ENCODE measurements at regions of chr2 and their contacts with region 1.

Region 1: GRCh38 chr2:158024288-158024898 is 77.3 kb upstream of the UPP2 start:
- DNase-seq: peak; percentile 58
- H3K4me3 Mint-ChIP-seq: no peak overlapping the region
- H3K27ac Mint-ChIP-seq: no peak overlapping the region
- H3K4me1 Mint-ChIP-seq: peaks cover 5% of the 10 kb centered on the region
- H3K27me3 Mint-ChIP-seq: peaks cover 3% of the 10 kb centered on the region

Region 2: DNA sequence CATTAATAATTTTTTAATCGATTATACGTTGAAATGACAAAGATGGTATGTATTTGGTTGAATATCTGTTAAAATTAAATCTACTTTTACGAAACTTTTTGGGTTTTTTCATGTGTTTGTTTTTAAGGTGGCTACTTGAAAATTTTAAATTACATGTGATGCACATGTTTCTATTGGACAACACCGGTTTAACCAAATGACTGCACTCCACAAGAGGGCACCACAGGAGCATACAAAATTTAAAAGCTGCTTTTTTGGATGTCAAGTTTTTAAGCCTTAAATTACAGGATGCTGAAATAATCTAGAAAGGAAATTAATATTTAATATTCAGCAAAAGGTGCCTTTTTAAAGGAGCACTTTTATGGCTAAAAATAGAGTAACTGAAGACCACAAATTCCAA is 247.0 kb before region 1 on chr2:
- CTCF ChIA-PET with region 1: interaction called, 10 read pairs
- POLR2A ChIA-PET with region 1: no interaction called
- DNase-seq: peak; percentile 56
- H3K4me3 Mint-ChIP-seq: no peak overlapping the region
- H3K27ac Mint-ChIP-seq: no peak overlapping the region
- H3K4me1 Mint-ChIP-seq: peaks cover 11% of the 10 kb centered on the region
- H3K27me3 Mint-ChIP-seq: no peaks in the 10 kb centered on the region

Region 3: DNA sequence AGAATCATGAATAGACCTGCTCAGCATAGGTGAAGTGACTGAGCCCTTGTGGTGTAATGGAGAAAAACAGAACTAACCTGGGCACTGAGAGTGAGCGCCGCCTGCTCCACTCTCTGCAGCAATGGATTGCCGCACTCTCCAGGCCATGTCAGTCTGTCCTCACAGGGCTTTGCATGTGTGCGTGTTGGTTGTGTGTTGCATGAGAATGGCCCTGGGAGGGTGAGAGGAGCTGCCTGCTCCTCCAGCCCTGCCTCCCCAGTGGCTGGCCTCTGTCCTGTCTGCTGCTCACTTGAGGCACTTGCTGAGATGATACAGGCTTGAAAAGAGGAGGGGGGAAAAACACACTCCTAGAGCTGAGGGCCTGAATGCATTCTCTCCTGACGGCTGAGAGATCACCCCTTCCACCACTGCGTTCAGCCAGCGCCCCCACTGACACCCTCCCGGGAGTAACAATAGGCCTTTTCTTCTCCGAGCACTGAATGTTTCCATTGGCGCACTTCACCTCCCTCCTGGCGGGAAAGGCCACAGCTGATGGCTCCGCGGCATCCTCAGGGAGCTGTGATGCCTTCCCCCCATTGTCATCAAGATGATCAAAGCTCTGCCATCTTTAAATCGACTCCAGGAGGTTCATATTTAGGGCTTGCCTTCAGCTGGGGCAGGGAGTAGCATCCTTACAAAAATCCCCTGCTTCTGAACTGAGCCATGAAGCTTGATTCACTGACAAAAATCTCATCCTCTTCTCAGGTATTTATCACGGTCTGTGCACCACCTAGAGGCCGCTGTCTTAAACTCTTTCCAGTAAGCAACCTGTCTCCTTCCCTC is 720.9 kb after region 1 on chr2:
- CTCF ChIA-PET with region 1: interaction called, 25 read pairs
- POLR2A ChIA-PET with region 1: no interaction called
- DNase-seq: peak; percentile 35
- H3K4me3 Mint-ChIP-seq: no peak overlapping the region
- H3K27ac Mint-ChIP-seq: no peak overlapping the region
- H3K4me1 Mint-ChIP-seq: no peaks in the 10 kb centered on the region
- H3K27me3 Mint-ChIP-seq: peaks cover 15% of the 10 kb centered on the region

Region 4: DNA sequence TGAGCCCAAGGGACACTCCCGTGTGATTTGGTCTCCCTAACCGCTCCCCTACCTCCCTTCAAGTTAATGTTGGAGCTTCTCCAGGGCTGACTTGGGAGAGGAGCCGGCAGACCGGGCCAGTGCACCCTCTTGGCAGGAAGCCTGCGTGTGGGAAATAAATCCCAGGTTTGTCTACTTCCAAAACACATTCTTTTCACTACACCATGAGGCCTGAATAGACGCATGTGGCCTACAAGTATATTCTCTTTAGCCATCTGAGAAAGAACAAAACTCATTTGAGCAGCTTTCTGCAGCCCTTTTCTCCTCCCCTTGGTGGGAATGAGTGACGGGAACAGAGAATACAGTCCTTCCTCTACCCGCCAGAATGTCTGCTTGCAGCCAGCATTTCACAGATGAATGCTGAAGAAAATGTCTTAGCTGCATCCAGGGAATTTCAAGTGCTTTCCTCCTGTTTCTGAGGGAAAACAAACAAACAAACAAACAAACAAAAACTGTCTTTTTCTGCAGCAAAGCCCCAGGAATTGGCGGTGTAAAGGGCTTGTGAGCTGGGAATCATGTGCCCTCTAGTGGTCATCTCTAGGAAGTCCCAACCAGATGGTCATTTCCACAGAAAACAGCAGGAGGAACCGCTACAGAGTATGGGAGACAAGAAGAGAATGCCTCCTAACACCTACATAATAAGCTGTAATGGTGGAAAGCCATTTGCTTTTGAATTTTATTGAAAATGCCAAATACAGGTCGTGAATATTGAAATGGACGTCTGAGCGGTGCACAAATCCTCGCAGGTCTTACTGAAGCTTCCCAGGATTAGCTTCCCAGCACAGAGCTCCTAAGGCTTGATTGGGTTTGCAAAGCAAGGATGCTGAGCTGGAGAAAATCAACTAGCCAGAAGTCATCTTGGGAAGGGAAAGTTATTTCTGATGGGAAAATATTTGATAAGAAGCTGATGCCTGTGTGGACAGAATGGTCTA is 729.5 kb after region 1 on chr2:
- CTCF ChIA-PET with region 1: interaction called, 17 read pairs
- POLR2A ChIA-PET with region 1: interaction called, 3 read pairs
- DNase-seq: peak; percentile 21
- H3K4me3 Mint-ChIP-seq: no peak overlapping the region
- H3K27ac Mint-ChIP-seq: no peak overlapping the region
- H3K4me1 Mint-ChIP-seq: no peaks in the 10 kb centered on the region
- H3K27me3 Mint-ChIP-seq: peaks cover 19% of the 10 kb centered on the region